ENCODE measurements at regions of chr12 and their contacts with region 1.

Region 1: GRCh38 chr12:32755654-32756475 is at the start of gene YARS2:
- DNase-seq: peak; percentile 85
- H3K4me3 Mint-ChIP-seq: peak within 1 kb of the TSS; percentile 92
- H3K27ac Mint-ChIP-seq: peak within 1 kb of the TSS; percentile 84
- H3K4me1 Mint-ChIP-seq: peaks cover 22% of the 10 kb centered on the region
- H3K27me3 Mint-ChIP-seq: no peaks in the 10 kb centered on the region
- total RNA-seq, gene YARS2: 29.3 and 30.3 TPM in 2 replicates

Region 2: DNA sequence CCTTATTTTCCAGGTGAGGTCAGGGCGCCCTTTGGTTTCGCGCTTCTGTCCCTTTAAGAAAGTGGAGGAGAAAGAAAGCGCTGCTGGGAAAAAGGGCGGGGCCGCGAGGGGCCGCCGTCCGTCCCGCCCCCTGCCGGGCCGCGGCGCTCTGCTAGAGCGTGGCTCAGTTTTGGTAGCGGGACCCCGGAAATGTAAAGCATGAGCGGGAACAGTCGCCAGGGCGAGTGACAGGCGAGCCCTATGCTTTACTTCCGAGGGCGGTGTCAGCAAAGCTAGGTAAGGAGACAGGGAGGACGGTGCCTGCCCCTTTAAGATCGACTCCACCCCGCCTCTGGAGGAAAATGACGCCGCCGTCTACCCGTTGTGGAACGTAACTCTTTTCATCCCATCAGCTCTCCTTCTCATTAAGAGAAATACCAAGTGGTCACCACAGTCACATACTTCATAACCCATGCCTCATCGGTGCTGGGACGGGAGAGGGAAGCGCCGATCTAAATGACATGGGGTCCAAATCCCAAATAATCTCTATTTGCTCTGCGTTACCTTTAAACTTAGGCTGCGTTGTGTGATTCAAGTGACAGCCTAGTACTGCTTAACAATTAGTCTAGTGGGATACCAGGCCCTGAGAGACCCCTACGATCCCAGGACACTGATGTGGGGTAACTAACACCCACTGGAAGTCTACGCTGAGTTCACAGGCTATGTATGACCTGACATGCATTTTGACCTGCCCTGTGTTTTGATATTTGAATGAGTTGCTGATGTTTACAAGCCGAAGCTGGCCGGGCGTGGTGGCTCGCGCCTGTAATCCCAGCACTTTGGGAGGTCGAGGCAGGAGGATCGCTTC is 1096.6 kb before region 1 on chr12 and contains the start of gene ETFBKMT:
- intact Hi-C with region 1: loop called (anchors 1 kb)
- DNase-seq: peak; percentile 95
- H3K4me3 Mint-ChIP-seq: peak within 1 kb of the TSS; percentile 95
- H3K27ac Mint-ChIP-seq: peak within 1 kb of the TSS; percentile 97
- H3K4me1 Mint-ChIP-seq: peaks cover 5% of the 10 kb centered on the region
- H3K27me3 Mint-ChIP-seq: no peaks in the 10 kb centered on the region
- total RNA-seq, gene ETFBKMT: 0.37 and 0.39 TPM in 2 replicates

Region 3: DNA sequence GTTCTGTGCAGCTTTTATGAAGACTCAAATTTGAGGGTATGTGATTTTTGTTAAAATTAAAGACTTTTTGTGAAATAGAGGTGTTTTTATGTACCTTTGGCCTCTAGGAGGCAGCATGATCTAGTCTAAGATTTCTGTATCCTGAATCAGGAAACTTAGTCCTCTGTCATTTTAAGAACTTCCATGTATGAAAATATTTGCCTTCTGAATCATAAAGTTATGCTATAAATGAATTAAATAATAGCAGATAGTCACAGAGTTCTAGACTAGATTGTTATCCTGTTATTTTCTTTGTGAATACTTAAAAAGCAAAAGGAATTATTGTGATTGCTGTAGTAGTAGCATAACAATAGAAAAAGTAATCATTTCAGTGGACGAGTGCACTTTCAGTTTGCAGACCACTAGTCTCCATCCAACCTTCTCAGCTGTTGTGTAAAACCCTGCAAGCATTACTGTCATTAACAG is 300.2 kb before region 1 on chr12:
- intact Hi-C with region 1: loop called (anchors 2 kb)
- DNase-seq: no peak
- H3K4me3 Mint-ChIP-seq: no peak overlapping the region
- H3K27ac Mint-ChIP-seq: no peak overlapping the region
- H3K4me1 Mint-ChIP-seq: peaks cover 2% of the 10 kb centered on the region
- H3K27me3 Mint-ChIP-seq: peaks cover 2% of the 10 kb centered on the region

Region 4: DNA sequence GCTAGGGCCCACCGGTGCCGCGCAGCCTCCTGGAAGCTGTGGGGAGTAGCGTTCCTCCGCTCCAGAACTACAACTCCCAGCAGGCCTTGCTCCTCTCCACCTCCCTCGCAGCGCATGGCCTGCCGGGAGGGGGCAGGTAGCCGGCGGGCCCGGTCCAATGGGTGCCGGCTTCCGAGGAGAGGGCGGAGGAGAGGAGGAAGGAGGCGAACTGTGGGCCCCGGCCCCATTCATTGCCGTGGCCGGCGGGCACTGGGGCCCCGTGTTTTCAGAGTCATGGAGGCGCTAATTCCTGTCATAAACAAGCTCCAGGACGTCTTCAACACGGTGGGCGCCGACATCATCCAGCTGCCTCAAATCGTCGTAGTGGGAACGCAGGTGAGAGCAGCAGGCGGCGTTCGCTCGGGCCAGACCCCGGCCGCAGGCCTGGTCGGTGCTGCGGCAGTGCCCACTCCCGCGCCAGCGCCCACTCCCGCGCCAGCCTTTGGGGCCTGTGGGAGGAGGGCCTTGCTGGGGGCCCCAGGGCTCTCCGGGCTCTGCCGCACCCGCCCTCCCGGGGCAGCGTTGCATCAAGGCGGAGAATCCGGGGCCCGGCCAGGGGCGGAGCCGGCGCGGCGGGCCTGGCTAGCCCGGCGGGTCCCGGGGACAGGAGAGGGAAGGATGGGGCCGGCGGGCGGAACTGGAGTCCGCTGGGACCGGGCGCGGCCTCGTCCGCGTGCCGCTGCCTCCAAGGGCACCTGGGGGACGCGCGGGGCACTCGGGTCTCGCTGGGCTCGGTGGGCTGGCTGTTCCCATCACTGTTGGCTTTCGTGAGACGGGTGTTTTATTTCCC is 76.6 kb before region 1 on chr12 and contains the start of gene DNM1L:
- intact Hi-C with region 1: loop called (anchors 1 kb)
- DNase-seq: peak; percentile 89
- H3K4me3 Mint-ChIP-seq: peak within 1 kb of the TSS; percentile 93
- H3K27ac Mint-ChIP-seq: peak within 1 kb of the TSS; percentile 89
- H3K4me1 Mint-ChIP-seq: peaks cover 25% of the 10 kb centered on the region
- H3K27me3 Mint-ChIP-seq: no peaks in the 10 kb centered on the region
- total RNA-seq, gene DNM1L: 97.5 and 108 TPM in 2 replicates

Region 5: GRCh38 chr12:34022079-34022830 is 1266.4 kb after region 1 on chr12 and contains the start of gene ALG10:
- intact Hi-C with region 1: loop called (anchors 1 kb)
- DNase-seq: peak; percentile 95
- H3K4me3 Mint-ChIP-seq: peak within 1 kb of the TSS; percentile 97
- H3K27ac Mint-ChIP-seq: peak within 1 kb of the TSS; percentile 95
- H3K4me1 Mint-ChIP-seq: peaks cover 25% of the 10 kb centered on the region
- H3K27me3 Mint-ChIP-seq: no peaks in the 10 kb centered on the region
- total RNA-seq, gene ALG10: 18.7 and 20.4 TPM in 2 replicates

Measured in activated T-helper 2 cell treated with anti-CD3 and anti-CD28 coated beads, Interferon-gamma antibody, Interleukin-2, Interleukin-4, amounts not matched to agents 10 μg/mL and 5 μg/mL and 100 μg/mL, durations not matched to agents 14 hours and 24 hours and 36 hours (primary cell).